Right ventricle myocardium inferior (tissue), 1 donor: ENCODE measurements at regions of chr12 and their contacts with region 1.

Region 1: DNA sequence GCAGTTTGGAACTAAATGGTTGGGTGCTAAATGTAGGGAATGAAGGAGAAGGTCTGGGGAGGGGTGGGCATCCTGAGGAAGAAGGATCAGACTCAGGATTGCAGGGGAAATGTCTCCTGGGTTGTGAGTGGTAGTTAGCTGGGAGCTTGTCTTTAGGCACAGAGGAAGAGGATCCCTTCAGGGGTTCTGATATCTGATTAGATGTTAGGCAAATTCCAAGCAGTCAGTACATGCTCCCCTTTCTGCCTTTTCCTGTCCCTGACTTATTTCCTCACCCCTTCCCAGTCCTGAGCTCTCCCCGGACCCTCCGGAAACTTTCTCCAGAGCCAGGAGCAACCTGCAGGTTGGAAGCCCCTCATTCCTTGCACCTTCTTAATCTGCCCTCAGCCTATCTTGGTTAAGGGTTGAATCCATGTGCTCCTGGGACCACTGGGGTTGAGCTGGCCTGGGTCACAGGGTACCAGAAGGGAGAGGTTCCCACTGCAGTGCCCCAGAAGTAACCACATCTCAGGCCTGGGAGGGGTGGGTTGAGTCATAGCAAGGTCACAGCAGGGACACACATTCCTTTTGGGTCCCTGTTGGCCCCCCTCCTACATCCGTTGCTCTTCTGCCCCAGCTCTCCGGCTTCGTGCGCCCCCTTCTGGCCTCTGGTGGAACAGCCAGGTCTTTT is 1.6 kb downstream of the IGFBP6 start:
- DNase-seq: peak; percentile 93
- ATAC-seq: peak; percentile 74

Region 2: DNA sequence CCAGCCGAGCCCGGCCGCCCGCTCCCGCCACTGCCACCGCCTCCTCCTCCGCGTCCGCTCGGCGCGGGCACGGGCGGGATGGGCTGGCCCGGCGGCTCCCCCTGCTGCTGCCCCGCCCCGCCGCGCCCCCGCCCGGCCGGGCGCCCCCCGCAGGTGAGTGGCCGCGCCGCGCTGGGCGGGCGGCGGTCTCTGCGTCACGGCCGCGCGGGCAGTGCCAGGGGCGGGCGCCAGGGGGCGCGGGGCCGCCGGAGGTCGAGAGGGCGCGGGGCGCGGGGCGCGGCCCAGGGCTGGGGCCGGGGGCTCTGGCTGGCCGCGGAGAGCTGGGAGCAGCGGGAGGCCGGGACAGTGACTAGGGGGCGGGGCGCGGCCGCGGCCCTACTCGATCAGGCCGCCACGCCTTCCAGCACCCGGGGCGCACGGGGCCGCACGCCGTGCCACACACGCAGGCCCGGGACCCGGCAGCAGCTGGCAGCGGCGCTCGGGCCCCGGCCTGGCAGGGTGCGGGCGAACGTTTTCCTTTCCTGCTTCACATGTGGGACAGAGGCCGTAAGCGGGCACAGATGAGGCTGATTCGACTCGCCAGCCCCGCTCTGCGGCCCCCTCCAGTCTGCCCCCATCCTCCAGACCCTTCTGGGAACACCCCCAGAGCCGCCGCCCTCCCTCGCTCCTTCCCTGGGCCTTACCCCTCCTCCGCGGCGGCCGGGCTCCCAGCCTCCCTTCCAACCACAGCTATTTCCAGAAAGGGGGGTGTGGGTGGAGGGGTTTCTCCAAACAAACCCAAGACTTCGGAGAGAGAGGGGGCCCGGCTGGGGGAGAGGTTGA is 51.7 kb before region 1 on chr12:
- intact Hi-C with region 1: loop called (anchors 10 kb)
- DNase-seq: peak; percentile 91
- ATAC-seq: peak; percentile 11

Region 3: DNA sequence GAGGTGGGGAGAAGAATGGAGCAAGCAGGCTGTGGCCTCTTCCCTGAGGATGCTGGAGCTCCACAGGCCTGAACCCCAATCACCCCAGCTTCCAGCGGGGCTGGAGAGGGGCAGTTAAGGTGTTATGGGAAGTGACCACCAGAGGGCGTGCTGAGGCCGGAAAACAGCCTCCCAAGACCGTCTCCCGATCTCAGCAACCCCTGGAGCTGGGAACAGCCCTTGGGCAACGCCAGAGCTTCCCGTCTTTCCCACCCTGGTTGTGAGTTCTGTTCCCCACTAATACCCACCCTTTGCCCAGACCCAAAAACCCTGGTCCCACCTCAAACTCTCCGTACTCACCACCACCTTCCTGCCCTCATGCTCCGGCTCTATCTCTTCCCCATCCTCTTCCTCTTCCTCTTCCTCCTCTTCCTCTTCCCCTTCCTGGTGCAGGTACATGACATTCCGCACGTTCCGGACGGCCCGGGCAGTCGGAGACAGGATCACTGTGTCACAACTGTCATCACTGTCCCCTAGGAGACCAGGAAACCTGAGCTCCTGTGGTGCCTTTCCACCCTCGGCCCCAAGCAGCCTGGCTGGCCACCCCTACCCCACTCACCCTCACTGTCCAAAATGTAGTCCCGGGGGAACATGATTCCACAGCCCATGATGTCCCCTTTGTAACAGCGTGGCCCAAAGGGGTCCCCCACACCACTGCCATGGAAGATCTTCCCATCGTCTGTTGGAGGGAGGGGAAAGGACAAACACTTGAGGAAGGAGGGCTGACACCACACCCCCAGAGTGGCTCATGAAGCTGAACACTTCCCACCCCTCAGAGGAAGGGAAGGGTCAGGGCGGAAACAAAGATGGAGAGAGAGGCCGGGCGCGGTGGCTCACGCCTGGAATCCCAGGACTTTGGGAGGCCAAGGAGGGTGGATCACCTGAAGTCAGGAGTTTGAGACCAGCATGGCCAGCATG is 32.9 kb before region 1 on chr12:
- intact Hi-C with region 1: loop called (anchors 1 kb)
- DNase-seq: peak; percentile 86
- ATAC-seq: peak; percentile 57

Region 4: GRCh38 chr12:53079226-53080117 is 19.6 kb before region 1 on chr12 and contains the start of gene SPRYD3:
- intact Hi-C with region 1: loop called (anchors 2 kb)
- DNase-seq: peak; percentile 99
- ATAC-seq: peak; percentile 99
- total RNA-seq, gene SPRYD3: 41.0 TPM

Region 5: DNA sequence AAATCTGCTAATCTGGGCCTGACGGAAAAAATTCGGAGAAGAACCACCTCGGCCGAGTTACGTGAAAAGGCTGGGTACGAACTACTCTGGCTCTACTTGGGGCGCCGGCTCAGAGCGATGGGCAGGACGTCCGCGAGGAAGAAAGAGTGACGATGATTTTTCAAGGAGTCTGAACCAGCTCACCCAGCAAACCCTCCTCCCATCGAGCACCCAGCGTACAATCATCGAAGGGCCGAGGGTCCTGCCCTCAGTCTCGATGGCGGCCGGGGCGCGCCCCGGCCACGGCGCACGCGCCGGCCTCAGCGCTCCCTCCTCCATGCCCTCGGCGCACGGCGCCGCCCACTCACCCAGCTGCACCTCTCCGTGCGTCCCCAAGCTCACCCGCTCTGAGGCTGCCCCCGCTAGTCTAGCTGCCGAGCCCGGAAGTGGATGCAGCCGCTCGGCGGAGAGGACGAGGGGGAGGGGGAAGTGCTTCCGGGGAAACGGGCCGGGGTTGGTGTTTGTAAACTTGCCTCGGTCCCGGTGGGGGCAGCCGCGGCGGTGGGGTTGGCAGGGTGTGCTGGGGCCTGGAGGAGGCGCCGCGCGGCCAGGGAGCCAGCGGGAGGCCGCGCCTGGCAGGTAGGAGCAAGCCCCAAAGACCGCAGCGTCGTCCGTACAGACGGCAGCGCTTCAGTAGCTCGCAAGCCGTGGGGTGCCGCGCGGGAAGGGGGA is 81.3 kb after region 1 on chr12 and contains the starts of genes CSAD and ZNF740:
- intact Hi-C with region 1: loop called (anchors 1 kb)
- DNase-seq: peak; percentile 99
- ATAC-seq: peak; percentile 100
- total RNA-seq, gene CSAD: 10.8 TPM
- total RNA-seq, gene ZNF740: 31.5 TPM